ENCODE measurements at regions of chr2 and their contacts with region 1.

Region 1: DNA sequence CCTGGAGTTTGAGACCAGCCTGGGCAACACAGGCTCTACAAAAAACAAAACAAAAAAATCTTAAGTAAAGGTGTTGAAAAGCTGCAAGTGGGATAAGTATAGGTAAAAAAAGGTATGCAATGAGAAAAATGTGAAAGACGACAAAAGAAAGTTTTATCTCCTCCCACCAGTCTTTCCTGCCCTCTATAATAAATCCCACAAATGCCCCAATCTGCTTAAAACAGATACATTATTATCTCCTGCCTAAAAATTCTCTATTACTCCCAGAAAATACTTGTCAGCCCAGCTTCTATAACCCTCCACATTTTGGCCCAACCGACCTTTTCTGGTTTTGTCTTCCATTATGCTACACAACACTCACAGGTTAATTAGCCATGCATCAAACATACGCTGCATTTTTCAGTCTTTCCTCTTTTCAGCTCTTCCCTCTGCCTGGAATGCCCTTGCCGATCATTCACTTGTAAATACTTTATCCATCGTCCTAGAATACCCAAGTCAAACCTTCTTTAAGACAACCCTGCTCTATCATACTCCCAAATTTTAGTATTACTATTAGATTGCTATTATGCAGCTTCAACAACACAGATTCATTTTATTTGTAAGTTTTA is 10.8 kb downstream of the ASXL2 start:
- DNase-seq: no peak
- ATAC-seq: no peak; the same call in 2 of the 3 replicates
- H3K4me3 ChIP-seq: no peak overlapping the region
- H3K27ac ChIP-seq: no peak overlapping the region
- H3K4me1 ChIP-seq: peaks cover 0 to 3% of the 10 kb centered on the region in 2 experiments; a peak in 1 of 5 replicates
- H3K27me3 ChIP-seq: no peaks in the 10 kb centered on the region
- CTCF ChIP-seq: no peak
- EP300 ChIP-seq: no peak
- POLR2A ChIP-seq: no peak
- RAD21 ChIP-seq: no peak

Region 2: GRCh38 chr2:25878361-25879132 is 11.0 kb after region 1 on chr2 and contains the start of gene ASXL2:
- CTCF ChIA-PET with region 1: no interaction called
- POLR2A ChIA-PET with region 1: interaction called, 15 read pairs
- in situ Hi-C with region 1: no loop called
- intact Hi-C with region 1: no loop called
- DNase-seq: peak; percentile 93 to 98 (median 95)
- ATAC-seq: peak; percentile 91
- H3K4me3 ChIP-seq: peak within 1 kb of the TSS; percentile 92
- H3K27ac ChIP-seq: peak within 1 kb of the TSS; percentile 91
- H3K4me1 ChIP-seq: peaks cover 5 to 9% of the 10 kb centered on the region in 2 experiments
- H3K27me3 ChIP-seq: no peaks in the 10 kb centered on the region
- CTCF ChIP-seq: peak in 1 of 3 experiments; percentile 20; a peak in 1 of 6 replicates
- EP300 ChIP-seq: peak; percentile 18; the same call in 1 of the 2 replicates
- POLR2A ChIP-seq: peak; percentile 79
- RAD21 ChIP-seq: no peak
- polyA plus RNA-seq, gene ASXL2: 2.2 to 2.5 TPM

Region 3: DNA sequence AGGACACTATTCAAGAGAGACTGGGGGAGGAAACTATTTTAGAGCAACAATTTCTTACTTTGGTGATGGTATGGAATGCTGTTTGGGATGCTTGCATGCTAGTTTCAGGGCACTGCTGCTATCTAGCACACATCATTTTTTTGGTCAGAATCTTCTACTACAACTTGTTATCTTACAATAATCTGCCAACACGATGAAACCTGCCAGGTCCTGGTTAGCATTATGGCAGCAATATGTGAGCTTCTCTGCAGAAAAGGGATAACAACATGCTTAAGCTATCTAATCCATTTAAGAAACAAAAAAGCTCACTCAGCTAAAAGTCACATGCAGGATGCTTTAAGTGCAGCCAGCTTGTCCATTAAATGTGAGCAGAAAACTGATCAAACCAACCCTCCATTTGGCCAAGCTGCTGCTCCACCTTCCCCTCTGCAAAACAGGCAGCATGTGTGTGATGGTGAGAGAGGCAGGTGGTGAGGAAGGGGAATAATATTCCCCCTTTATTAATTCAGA is 335.5 kb after region 1 on chr2:
- CTCF ChIA-PET with region 1: no interaction called
- POLR2A ChIA-PET with region 1: no interaction called
- in situ Hi-C with region 1: no loop called
- intact Hi-C with region 1: no loop called
- DNase-seq: no peak
- ATAC-seq: no peak
- H3K4me3 ChIP-seq: no peak overlapping the region
- H3K27ac ChIP-seq: no peak overlapping the region
- H3K4me1 ChIP-seq: no peaks in the 10 kb centered on the region
- H3K27me3 ChIP-seq: no peaks in the 10 kb centered on the region
- CTCF ChIP-seq: no peak
- EP300 ChIP-seq: no peak
- POLR2A ChIP-seq: no peak
- RAD21 ChIP-seq: no peak

Region 4: GRCh38 chr2:26438526-26438925 is 571.0 kb after region 1 on chr2:
- CTCF ChIA-PET with region 1: no interaction called
- POLR2A ChIA-PET with region 1: no interaction called
- in situ Hi-C with region 1: no loop called
- intact Hi-C with region 1: no loop called
- DNase-seq: no peak
- ATAC-seq: peak; percentile 65
- H3K4me3 ChIP-seq: no peak overlapping the region
- H3K27ac ChIP-seq: no peak overlapping the region
- H3K4me1 ChIP-seq: peaks cover 2 to 6% of the 10 kb centered on the region in 2 experiments; a peak in 3 of 5 replicates
- H3K27me3 ChIP-seq: no peaks in the 10 kb centered on the region
- CTCF ChIP-seq: no peak
- EP300 ChIP-seq: no peak
- POLR2A ChIP-seq: no peak
- RAD21 ChIP-seq: no peak